ENCODE measurements at regions of chr6 and their contacts with region 1.

Region 1: GRCh38 chr6:117449549-117450439 is 24.1 kb upstream of the ROS1 start:
- DNase-seq: peak; percentile 83 to 91 (median 84)
- H3K4me3 ChIP-seq: no peak overlapping the region
- H3K27ac ChIP-seq: no peak overlapping the region
- H3K4me1 ChIP-seq: no peaks in the 10 kb centered on the region
- H3K27me3 ChIP-seq: peaks cover 4 to 32% (median 15%) of the 10 kb centered on the region in 5 experiments

Region 2: GRCh38 chr6:117432273-117432672 is 17.5 kb before region 1 on chr6:
- CTCF ChIA-PET with region 1: no interaction called
- POLR2A ChIA-PET with region 1: no interaction called
- DNase-seq: no peak
- H3K4me3 ChIP-seq: no peak overlapping the region
- H3K27ac ChIP-seq: no peak overlapping the region
- H3K4me1 ChIP-seq: no peaks in the 10 kb centered on the region
- H3K27me3 ChIP-seq: peaks cover 0 to 2% (median 0%) of the 10 kb centered on the region in 5 experiments

Region 3: GRCh38 chr6:117605169-117605826 is 155.5 kb after region 1 on chr6:
- CTCF ChIA-PET with region 1: interaction called, 13 read pairs
- POLR2A ChIA-PET with region 1: interaction called, 6 read pairs
- DNase-seq: peak; percentile 79 to 88 (median 88)
- H3K4me3 ChIP-seq: no peak overlapping the region
- H3K27ac ChIP-seq: no peak overlapping the region
- H3K4me1 ChIP-seq: peaks cover 7 to 23% (median 9%) of the 10 kb centered on the region in 4 experiments
- H3K27me3 ChIP-seq: peaks cover 0 to 4% (median 0%) of the 10 kb centered on the region in 5 experiments